Mammary epithelial cell (primary cell): ENCODE measurements at regions of chr5 and their contacts with region 1.

Region 1: DNA sequence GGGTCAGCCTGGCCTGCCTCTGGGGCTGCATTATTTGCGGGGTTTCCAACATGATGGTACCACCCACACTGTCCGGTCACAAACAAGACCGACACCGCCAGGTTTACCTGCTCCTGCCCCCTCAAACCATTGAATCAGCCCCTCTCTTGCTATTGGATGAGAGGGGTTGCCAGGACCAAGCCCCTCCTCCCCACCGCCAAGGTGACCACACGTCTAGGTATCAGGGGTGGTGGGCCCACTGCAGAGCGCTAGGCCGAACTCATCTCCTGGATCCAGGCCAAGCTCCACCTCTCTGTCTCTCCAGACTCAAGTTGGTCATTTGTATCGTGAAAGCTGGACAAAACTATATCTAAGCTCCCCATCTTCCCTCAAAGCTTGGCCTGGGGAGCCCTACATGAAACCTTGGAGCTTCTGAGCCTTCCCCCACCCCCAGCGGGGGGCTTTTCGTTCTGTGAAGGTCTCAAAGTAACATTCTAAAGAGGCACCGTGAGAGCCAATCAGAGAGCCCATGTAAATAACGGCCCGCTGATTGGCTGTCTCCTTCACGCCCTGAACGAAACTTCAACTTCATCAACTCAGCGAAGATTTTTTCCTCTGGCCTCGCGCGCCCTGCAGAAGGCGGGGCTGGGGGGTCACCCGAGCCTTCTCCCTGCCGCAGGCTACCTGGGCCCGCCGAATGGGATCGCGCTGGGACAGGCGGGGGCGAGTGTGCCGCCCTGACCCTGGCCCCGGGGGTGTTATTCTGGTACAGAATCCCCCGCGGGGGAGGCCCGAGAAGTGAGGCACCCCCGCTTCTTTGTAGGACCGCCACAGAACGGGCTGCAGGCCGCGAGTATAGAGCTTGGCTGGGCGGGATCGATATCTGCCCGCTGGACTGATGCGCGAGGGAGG is 49.6 kb upstream of the PSD2 start:
- DNase-seq: peak; percentile 43
- H3K4me3 ChIP-seq: peak overlapping the region in 2 of 3 experiments; percentile 15
- H3K27ac ChIP-seq: no peak overlapping the region
- H3K4me1 ChIP-seq: peaks cover 28% of the 10 kb centered on the region
- H3K27me3 ChIP-seq: peaks cover 13% of the 10 kb centered on the region
- CTCF ChIP-seq: no peak

Region 2: GRCh38 chr5:139696894-139697658 is 49.0 kb before region 1 on chr5:
- CTCF ChIA-PET with region 1: no interaction called
- dilution Hi-C with region 1: loop called (anchors 10 kb)
- in situ Hi-C with region 1: no loop called
- intact Hi-C with region 1: no loop called
- DNase-seq: peak; percentile 47
- H3K4me3 ChIP-seq: peak overlapping the region in 2 of 3 experiments; percentile 28 to 29
- H3K27ac ChIP-seq: no peak overlapping the region
- H3K4me1 ChIP-seq: peaks cover 17% of the 10 kb centered on the region
- H3K27me3 ChIP-seq: no peaks in the 10 kb centered on the region
- CTCF ChIP-seq: no peak

Region 3: GRCh38 chr5:139711067-139711905 is 34.8 kb before region 1 on chr5:
- CTCF ChIA-PET with region 1: no interaction called
- dilution Hi-C with region 1: loop called (anchors 5 kb)
- in situ Hi-C with region 1: no loop called
- intact Hi-C with region 1: no loop called
- DNase-seq: peak; percentile 38
- H3K4me3 ChIP-seq: peak overlapping the region; percentile 42 to 51 (median 46)
- H3K27ac ChIP-seq: no peak overlapping the region
- H3K4me1 ChIP-seq: peaks cover 11% of the 10 kb centered on the region
- H3K27me3 ChIP-seq: no peaks in the 10 kb centered on the region
- CTCF ChIP-seq: no peak

Region 4: GRCh38 chr5:139822553-139823425 is 76.7 kb after region 1 on chr5:
- CTCF ChIA-PET with region 1: no interaction called
- dilution Hi-C with region 1: loop called (anchors 5 kb)
- in situ Hi-C with region 1: no loop called
- intact Hi-C with region 1: no loop called
- DNase-seq: no peak
- H3K4me3 ChIP-seq: no peak overlapping the region
- H3K27ac ChIP-seq: no peak overlapping the region
- H3K4me1 ChIP-seq: no peaks in the 10 kb centered on the region
- H3K27me3 ChIP-seq: peaks cover 2% of the 10 kb centered on the region
- CTCF ChIP-seq: no peak

Region 5: GRCh38 chr5:139844472-139845145 is 98.6 kb after region 1 on chr5:
- CTCF ChIA-PET with region 1: no interaction called
- dilution Hi-C with region 1: loop called (anchors 5 kb)
- in situ Hi-C with region 1: no loop called
- intact Hi-C with region 1: no loop called
- DNase-seq: peak; percentile 41
- H3K4me3 ChIP-seq: no peak overlapping the region
- H3K27ac ChIP-seq: no peak overlapping the region
- H3K4me1 ChIP-seq: no peaks in the 10 kb centered on the region
- H3K27me3 ChIP-seq: no peaks in the 10 kb centered on the region
- CTCF ChIP-seq: peak; percentile 75 to 80

Region 6: DNA sequence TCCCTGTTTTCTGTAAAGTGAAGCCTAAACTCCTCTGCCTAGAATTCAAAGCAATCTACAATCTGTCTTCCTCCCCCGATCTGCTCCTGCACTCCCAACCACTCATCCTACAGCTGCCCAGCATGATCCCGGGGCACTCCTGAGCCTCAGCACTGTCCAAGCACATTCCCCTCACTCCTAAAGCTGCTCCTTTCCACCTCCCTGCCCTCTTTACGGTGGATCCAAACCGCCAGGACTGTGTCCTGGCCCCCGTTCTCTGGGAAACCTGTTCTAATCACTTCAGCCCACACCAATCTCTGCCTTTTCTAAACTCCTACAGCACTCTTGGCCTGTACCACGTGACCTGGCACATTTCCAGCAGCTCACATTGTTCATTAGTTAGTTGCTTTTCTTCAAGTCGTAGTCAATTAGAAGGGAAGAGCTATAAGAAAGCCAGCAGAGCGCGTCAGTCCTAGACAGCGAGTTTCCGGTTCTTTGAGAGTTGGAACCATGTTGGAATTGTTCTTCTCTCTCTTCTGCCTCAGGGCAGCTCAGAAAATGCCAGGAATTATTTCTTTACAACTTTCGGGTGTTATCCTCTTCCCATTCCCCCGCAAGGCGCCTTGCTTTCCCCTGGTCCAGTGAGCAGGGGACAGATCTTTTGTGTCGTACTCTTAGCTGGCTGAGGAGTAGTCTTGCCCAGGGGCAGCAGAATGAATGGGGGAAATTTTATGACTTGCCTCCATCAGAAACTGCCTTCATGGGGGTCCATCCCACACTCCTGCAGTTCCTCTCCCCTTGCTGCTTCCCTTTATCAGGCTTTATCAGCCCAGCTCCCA is 236.3 kb after region 1 on chr5:
- CTCF ChIA-PET with region 1: no interaction called
- dilution Hi-C with region 1: no loop called
- in situ Hi-C with region 1: no loop called
- intact Hi-C with region 1: no loop called
- DNase-seq: peak; percentile 34
- H3K4me3 ChIP-seq: no peak overlapping the region
- H3K27ac ChIP-seq: peak overlapping the region; percentile 28
- H3K4me1 ChIP-seq: peaks cover 42% of the 10 kb centered on the region
- H3K27me3 ChIP-seq: no peaks in the 10 kb centered on the region
- CTCF ChIP-seq: no peak